ENCODE measurements at regions of chr9 and their contacts with region 1.

Region 1: DNA sequence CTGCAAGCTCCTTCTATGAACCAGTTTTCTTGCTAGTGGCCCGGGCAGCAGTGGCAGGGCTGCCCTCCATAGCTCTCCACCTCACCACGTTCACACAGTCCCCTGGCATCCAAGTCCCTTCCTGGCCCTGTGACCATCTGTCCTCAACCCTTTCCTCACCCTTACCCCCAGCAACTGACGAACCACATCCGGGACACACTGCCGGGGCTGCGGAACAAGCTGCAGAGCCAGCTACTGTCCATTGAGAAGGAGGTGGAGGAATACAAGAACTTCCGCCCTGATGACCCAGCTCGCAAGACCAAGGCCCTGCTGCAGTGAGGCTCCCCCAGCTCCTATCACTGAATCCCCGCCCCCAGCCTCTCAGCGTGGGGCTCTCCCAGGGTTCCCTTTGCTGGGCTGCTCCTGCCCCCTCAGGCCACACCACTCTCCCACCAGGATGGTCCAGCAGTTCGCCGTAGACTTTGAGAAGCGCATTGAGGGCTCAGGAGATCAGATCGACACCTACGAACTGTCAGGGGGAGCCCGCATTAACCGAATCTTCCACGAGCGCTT is 18.9 kb downstream of the DNM1 start:
- DNase-seq: no peak
- ATAC-seq: no peak
- H3K4me3 ChIP-seq: no peak overlapping the region
- H3K27ac ChIP-seq: no peak overlapping the region
- H3K4me1 ChIP-seq: peaks cover 0 to 17% (median 14%) of the 10 kb centered on the region in 9 donors
- H3K27me3 ChIP-seq: no peaks in the 10 kb centered on the region
- CTCF ChIP-seq: no peak

Region 2: GRCh38 chr9:128150594-128151308 is 71.4 kb before region 1 on chr9:
- intact Hi-C with region 1: no loop called
- DNase-seq: no peak
- ATAC-seq: peak in 7 of 8 donors; percentile 12 to 49 (median 18)
- H3K4me3 ChIP-seq: no peak overlapping the region
- H3K27ac ChIP-seq: no peak overlapping the region
- H3K4me1 ChIP-seq: peaks cover 5 to 25% (median 10%) of the 10 kb centered on the region in 9 donors
- H3K27me3 ChIP-seq: no peaks in the 10 kb centered on the region
- CTCF ChIP-seq: peak in 6 of 9 donors; percentile 16 to 49 (median 26)

Region 3: DNA sequence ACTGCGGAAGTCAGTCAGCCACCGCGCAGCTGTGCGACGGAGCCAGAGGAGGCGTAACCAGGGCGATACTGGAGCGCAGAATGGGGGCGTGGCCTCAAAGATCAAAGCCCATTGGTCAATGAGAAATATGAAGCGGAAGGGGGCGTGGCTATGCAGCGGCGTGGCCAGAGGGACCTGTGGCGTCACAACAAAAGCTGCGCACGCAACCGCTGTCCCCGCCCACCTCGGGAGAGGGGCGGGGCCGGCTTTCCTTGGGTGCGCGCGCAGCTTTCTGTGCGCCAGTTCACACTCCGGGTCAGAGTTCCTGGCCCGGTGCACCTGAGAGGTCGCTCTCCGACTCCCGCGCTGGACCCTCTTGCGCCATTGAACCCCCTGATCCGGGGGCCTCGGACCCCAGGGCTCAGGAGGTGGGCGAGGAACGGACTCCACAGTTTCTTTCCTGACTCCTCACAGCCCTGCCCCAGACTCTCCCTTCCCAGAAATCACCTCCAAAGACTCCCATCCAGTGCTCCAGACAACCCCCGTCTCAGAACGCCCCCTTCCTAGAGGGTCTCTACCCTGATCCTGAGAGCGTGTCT is 54.0 kb after region 1 on chr9 and contains the starts of genes GOLGA2 and SWI5:
- intact Hi-C with region 1: loop called in 1 of 10 experiments (anchors 5 kb)
- DNase-seq: peak; percentile 100
- ATAC-seq: peak; percentile 97 to 98 (median 98)
- H3K4me3 ChIP-seq: peak within 1 kb of the TSS; percentile 76 to 96 (median 90)
- H3K27ac ChIP-seq: peak within 1 kb of the TSS; percentile 10 to 96 (median 94)
- H3K4me1 ChIP-seq: peaks cover 3 to 56% (median 29%) of the 10 kb centered on the region in 9 donors
- H3K27me3 ChIP-seq: no peaks in the 10 kb centered on the region
- CTCF ChIP-seq: no peak
- total RNA-seq, gene GOLGA2: 78.0 to 101 (median 89.1) TPM
- total RNA-seq, gene SWI5: 13.9 to 23.8 (median 20.8) TPM